ENCODE measurements at regions of chr20 and their contacts with region 1.

Region 1: GRCh38 chr20:63778034-63778752 is 38.6 kb downstream of the SLC2A4RG start:
- DNase-seq: peak in 1 of 2 experiments; percentile 63
- H3K4me3 ChIP-seq: no peak overlapping the region
- H3K27ac ChIP-seq: no peak overlapping the region
- H3K4me1 ChIP-seq: peaks cover 11% of the 10 kb centered on the region
- H3K27me3 ChIP-seq: no peaks in the 10 kb centered on the region
- CTCF ChIP-seq: no peak

Region 2: GRCh38 chr20:63756648-63756991 is 21.6 kb before region 1 on chr20:
- CTCF ChIA-PET with region 1: interaction called, 12 read pairs
- POLR2A ChIA-PET with region 1: no interaction called
- intact Hi-C with region 1: no loop called
- DNase-seq: no peak
- H3K4me3 ChIP-seq: no peak overlapping the region
- H3K27ac ChIP-seq: no peak overlapping the region
- H3K4me1 ChIP-seq: no peaks in the 10 kb centered on the region
- H3K27me3 ChIP-seq: peaks cover 5% of the 10 kb centered on the region; the same call in 1 of the 2 replicates
- CTCF ChIP-seq: no peak

Region 3: GRCh38 chr20:63858393-63859165 is 80.4 kb after region 1 on chr20:
- CTCF ChIA-PET with region 1: no interaction called
- POLR2A ChIA-PET with region 1: no interaction called
- intact Hi-C with region 1: no loop called
- DNase-seq: no peak
- H3K4me3 ChIP-seq: no peak overlapping the region
- H3K27ac ChIP-seq: no peak overlapping the region
- H3K4me1 ChIP-seq: peaks cover 16% of the 10 kb centered on the region
- H3K27me3 ChIP-seq: no peaks in the 10 kb centered on the region
- CTCF ChIP-seq: no peak

Region 4: GRCh38 chr20:63894358-63895201 is 116.4 kb after region 1 on chr20 and contains the start of gene DNAJC5:
- CTCF ChIA-PET with region 1: no interaction called
- POLR2A ChIA-PET with region 1: no interaction called
- intact Hi-C with region 1: no loop called
- DNase-seq: peak; percentile 82 to 98
- H3K4me3 ChIP-seq: peak within 1 kb of the TSS; percentile 75
- H3K27ac ChIP-seq: peak within 1 kb of the TSS; percentile 68
- H3K4me1 ChIP-seq: peaks cover 40% of the 10 kb centered on the region
- H3K27me3 ChIP-seq: no peaks in the 10 kb centered on the region
- CTCF ChIP-seq: no peak
- total RNA-seq, gene DNAJC5: 47.0 and 48.1 TPM in 2 replicates

Measured in PC-9 (cell line).